GM13976 (cell line): ENCODE measurements at regions of chr11 and their contacts with region 1.

Region 1: GRCh38 chr11:60485986-60486385 is 6.6 kb upstream of the MS4A12 start:
- DNase-seq: peak; percentile 87
- CTCF ChIP-seq: peak; percentile 86

Region 2: GRCh38 chr11:59528713-59529112 is 957.3 kb before region 1 on chr11:
- in situ Hi-C with region 1: no loop called
- DNase-seq: no peak
- CTCF ChIP-seq: no peak

Region 3: GRCh38 chr11:60265373-60266214 is 220.4 kb before region 1 on chr11:
- in situ Hi-C with region 1: loop called (anchors 25 kb)
- DNase-seq: peak; percentile 29
- CTCF ChIP-seq: peak; percentile 36

Region 4: GRCh38 chr11:60363542-60364510 is 122.2 kb before region 1 on chr11:
- in situ Hi-C with region 1: loop called (anchors 10 kb)
- DNase-seq: peak; percentile 65
- CTCF ChIP-seq: peak; percentile 76

Region 5: DNA sequence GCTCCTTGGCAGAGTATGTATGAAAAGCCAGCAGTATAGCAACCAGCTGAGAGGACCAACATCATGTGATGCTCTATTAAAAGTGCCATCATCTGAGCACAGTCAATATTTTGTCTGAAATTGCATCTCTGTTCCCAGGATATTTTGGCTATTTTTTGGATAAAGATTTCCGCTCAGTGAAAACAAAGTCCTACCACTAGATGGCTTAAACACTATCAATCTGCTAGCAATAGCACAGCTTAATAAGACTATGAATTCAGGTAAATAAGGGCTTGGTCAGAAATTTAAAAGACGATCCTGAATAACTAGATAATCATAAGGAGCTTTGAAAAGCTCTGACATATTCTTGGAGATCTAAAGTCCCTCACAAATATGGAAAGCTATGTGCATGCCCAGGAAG is 103.6 kb after region 1 on chr11:
- in situ Hi-C with region 1: no loop called
- DNase-seq: no peak
- CTCF ChIP-seq: no peak

Region 6: GRCh38 chr11:60615497-60615896 is 129.5 kb after region 1 on chr11:
- in situ Hi-C with region 1: loop called (anchors 10 kb)
- DNase-seq: no peak
- CTCF ChIP-seq: no peak

Region 7: GRCh38 chr11:60725592-60725991 is 239.6 kb after region 1 on chr11:
- in situ Hi-C with region 1: no loop called
- DNase-seq: no peak
- CTCF ChIP-seq: no peak

Region 8: GRCh38 chr11:60951899-60952741 is 466.1 kb after region 1 on chr11 and contains the start of gene SLC15A3:
- in situ Hi-C with region 1: no loop called
- DNase-seq: peak; percentile 86
- CTCF ChIP-seq: no peak